Activated CD4-positive, alpha-beta memory T cell treated with anti-CD3 and anti-CD28 coated beads for 36 hours (primary cell): ENCODE measurements at regions of chr5 and their contacts with region 1.

Region 1: DNA sequence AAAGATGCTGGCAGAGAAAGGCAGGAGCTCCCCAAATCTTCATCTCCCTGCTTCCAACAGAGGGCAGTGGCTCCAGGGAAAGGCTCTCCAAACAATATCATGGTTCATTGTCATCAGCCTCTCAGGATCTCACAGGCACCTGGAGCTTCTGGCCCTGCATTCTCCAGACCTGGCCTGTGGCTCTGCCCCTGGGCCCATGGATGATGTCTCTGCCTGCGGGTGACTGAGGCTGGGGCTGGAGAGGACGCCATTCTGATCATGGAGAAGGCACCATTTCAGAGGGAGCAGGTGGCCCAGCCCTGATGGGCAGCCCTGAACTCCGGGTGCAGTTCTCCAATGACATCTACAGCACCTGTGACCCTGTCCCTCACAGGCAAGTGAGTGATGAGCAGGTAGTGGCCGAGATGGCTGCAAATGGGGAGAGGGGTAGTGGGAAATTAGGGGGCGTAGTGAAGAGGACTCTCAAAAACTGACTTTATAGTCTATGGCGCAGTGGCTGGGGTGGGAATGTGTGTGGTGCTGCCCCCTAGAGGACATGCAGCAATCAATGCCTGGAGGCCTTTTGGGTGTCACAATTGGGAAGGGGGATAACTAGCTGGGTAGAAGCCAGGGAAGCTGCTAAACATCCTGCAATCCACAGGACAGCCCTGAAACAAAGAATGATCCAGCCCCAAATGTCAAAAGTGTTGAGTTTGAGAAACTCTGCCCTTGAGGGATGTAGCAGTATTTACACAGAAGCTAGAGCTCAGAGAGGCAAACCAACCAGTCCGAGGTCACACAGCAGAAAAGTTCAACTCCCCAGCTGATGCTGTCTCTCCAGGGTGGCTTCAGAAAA is 3.2 kb downstream of the SH3PXD2B start:
- DNase-seq: peak; percentile 61
- H3K4me3 Mint-ChIP-seq: no peak overlapping the region
- H3K27ac Mint-ChIP-seq: no peak overlapping the region
- H3K4me1 Mint-ChIP-seq: peaks cover 15% of the 10 kb centered on the region
- H3K27me3 Mint-ChIP-seq: peaks cover 44% of the 10 kb centered on the region

Region 2: GRCh38 chr5:172334196-172334595 is 116.9 kb before region 1 on chr5:
- CTCF ChIA-PET with region 1: interaction called, 7 read pairs
- POLR2A ChIA-PET with region 1: no interaction called
- intact Hi-C with region 1: loop called (anchors 1 kb)
- DNase-seq: peak; percentile 28
- H3K4me3 Mint-ChIP-seq: no peak overlapping the region
- H3K27ac Mint-ChIP-seq: no peak overlapping the region
- H3K4me1 Mint-ChIP-seq: no peaks in the 10 kb centered on the region
- H3K27me3 Mint-ChIP-seq: peaks cover 5% of the 10 kb centered on the region

Region 3: DNA sequence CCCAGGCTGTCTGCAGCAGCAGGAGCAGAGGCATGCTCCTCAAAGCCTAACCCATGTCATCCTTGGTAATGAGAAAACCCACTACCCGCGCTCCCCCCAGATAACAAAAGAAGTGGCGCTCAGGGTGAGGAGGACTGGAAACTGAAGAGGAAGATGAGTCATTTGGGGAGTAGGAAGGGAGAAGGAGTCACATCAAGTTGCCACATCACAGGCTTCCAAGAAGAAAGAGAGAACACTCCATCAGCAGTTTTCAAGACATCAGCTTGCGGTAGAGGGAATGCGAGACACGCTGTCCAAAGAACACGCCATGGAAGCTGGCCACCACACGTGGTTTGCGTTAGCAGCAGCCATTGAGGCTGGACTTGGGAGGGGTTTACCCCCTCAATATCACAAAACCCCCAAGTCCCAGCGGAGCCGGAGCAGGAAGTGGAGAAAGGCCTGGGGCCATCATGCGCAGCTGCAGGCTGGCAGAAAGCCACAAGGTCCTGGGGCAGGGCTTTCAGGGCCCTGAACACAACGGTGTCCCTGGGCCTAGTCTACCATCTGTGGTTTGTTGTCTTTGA is 38.3 kb before region 1 on chr5:
- CTCF ChIA-PET with region 1: interaction called, 6 read pairs
- POLR2A ChIA-PET with region 1: no interaction called
- intact Hi-C with region 1: loop called (anchors 2 kb)
- DNase-seq: peak; percentile 51
- H3K4me3 Mint-ChIP-seq: no peak overlapping the region
- H3K27ac Mint-ChIP-seq: peak overlapping the region; percentile 2
- H3K4me1 Mint-ChIP-seq: peaks cover 22% of the 10 kb centered on the region
- H3K27me3 Mint-ChIP-seq: peaks cover 9% of the 10 kb centered on the region

Region 4: DNA sequence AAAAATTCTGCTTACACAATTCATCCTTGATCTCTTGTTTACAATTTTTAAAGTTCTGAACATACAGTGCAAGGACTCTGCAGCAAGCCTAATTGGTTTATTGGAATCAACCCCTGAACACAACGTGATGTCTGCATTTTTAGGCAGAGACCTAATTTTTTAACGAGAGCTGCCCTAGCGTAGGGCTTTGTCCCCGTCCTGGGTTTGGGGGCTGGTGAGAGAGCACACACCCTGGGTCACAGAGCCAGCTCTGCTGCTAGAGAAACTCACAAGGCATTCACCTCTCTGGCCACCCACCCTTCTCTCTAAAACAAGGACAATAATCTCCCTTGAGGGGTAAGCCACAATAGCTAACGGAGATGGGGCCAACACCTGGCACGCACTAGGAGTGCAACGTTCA is 25.0 kb before region 1 on chr5:
- CTCF ChIA-PET with region 1: interaction called, 15 read pairs
- POLR2A ChIA-PET with region 1: no interaction called
- intact Hi-C with region 1: no loop called
- DNase-seq: no peak
- H3K4me3 Mint-ChIP-seq: no peak overlapping the region
- H3K27ac Mint-ChIP-seq: no peak overlapping the region
- H3K4me1 Mint-ChIP-seq: no peaks in the 10 kb centered on the region
- H3K27me3 Mint-ChIP-seq: peaks cover 13% of the 10 kb centered on the region

Region 5: GRCh38 chr5:172437445-172438308 is 13.4 kb before region 1 on chr5:
- CTCF ChIA-PET with region 1: interaction called, 33 read pairs
- POLR2A ChIA-PET with region 1: no interaction called
- intact Hi-C with region 1: no loop called
- DNase-seq: no peak
- H3K4me3 Mint-ChIP-seq: no peak overlapping the region
- H3K27ac Mint-ChIP-seq: no peak overlapping the region
- H3K4me1 Mint-ChIP-seq: peaks cover 1% of the 10 kb centered on the region
- H3K27me3 Mint-ChIP-seq: peaks cover 3% of the 10 kb centered on the region

Region 6: DNA sequence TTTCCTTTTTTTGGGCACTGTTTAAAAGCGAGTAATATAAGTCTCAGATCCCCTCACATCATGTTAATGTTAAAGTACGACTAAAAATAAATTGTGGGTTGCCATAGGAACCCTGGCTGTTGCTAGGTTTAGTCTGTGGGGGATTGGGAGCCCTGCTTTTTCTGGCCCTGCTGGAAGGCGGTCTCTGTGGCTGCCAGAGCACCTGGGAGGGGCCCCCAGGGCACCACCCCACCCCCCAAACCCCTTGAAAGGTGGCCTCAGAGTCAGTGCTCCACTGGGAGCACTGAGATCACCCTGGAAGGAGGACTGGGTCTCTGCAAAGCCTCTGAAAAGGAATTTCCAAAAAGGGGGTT is 123.8 kb after region 1 on chr5:
- CTCF ChIA-PET with region 1: no interaction called
- POLR2A ChIA-PET with region 1: no interaction called
- intact Hi-C with region 1: no loop called
- DNase-seq: no peak
- H3K4me3 Mint-ChIP-seq: no peak overlapping the region
- H3K27ac Mint-ChIP-seq: no peak overlapping the region
- H3K4me1 Mint-ChIP-seq: no peaks in the 10 kb centered on the region
- H3K27me3 Mint-ChIP-seq: no peaks in the 10 kb centered on the region